ENCODE measurements at regions of chr11 and their contacts with region 1.

Region 1: GRCh38 chr11:101848262-101848661 is 66.5 kb upstream of the CEP126 start:
- DNase-seq: no peak
- H3K4me3 ChIP-seq: no peak overlapping the region
- H3K27ac ChIP-seq: no peak overlapping the region
- H3K27me3 ChIP-seq: no peaks in the 10 kb centered on the region
- CTCF ChIP-seq: peak; percentile 32; the same call in 1 of the 2 replicates

Region 2: DNA sequence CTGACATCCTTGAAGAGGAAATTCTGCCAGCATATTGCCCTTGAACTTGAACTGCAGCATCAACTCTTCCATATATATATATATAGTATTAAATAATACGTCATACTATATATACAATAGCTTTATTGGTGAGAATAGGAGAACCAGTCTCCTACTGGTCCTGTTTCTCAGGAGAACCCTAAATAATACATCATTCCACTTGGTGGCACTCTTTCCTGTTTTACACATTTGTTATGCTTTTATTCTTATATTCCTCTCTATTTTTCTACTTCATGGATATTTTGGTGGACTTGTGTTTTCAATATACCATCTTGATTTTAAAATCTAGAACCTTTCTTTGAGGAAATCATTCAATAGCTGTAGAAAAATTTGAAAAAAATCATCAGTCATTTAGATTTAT is 457.7 kb before region 1 on chr11:
- CTCF ChIA-PET with region 1: interaction called, 30 read pairs
- POLR2A ChIA-PET with region 1: no interaction called
- DNase-seq: no peak
- H3K4me3 ChIP-seq: no peak overlapping the region
- H3K27ac ChIP-seq: no peak overlapping the region
- H3K27me3 ChIP-seq: no peaks in the 10 kb centered on the region
- CTCF ChIP-seq: peak; percentile 47

Region 3: GRCh38 chr11:101428918-101429317 is 419.3 kb before region 1 on chr11:
- CTCF ChIA-PET with region 1: interaction called, 32 read pairs
- POLR2A ChIA-PET with region 1: no interaction called
- DNase-seq: no peak
- H3K4me3 ChIP-seq: no peak overlapping the region
- H3K27ac ChIP-seq: no peak overlapping the region
- H3K27me3 ChIP-seq: no peaks in the 10 kb centered on the region
- CTCF ChIP-seq: peak; percentile 67

Region 4: DNA sequence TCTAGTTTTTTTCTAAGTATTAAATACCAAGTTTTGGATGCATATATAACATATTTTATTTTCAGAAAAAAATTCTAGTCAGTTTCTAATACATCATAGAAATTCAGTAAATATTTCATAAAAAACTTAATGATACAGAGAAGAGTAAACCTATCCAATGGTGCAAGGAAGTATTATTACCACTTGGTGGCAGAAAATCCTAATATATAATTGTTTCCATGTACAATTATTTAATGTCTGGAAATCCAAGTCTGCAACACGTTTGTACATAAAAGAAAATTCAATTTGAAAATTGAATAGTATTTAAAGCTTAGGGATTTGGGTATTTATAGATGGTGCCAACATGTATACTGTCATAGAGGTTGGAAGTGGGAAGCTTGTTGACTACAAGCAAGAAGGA is 391.4 kb before region 1 on chr11:
- CTCF ChIA-PET with region 1: interaction called, 186 read pairs
- POLR2A ChIA-PET with region 1: no interaction called
- DNase-seq: no peak
- H3K4me3 ChIP-seq: no peak overlapping the region
- H3K27ac ChIP-seq: no peak overlapping the region
- H3K27me3 ChIP-seq: no peaks in the 10 kb centered on the region
- CTCF ChIP-seq: peak; percentile 46

Region 5: GRCh38 chr11:101686558-101687242 is 161.6 kb before region 1 on chr11:
- CTCF ChIA-PET with region 1: no interaction called
- POLR2A ChIA-PET with region 1: no interaction called
- DNase-seq: no peak
- H3K4me3 ChIP-seq: no peak overlapping the region
- H3K27ac ChIP-seq: no peak overlapping the region
- H3K27me3 ChIP-seq: no peaks in the 10 kb centered on the region
- CTCF ChIP-seq: no peak

Region 6: GRCh38 chr11:101759771-101760450 is 88.4 kb before region 1 on chr11:
- CTCF ChIA-PET with region 1: interaction called, 24 read pairs
- POLR2A ChIA-PET with region 1: no interaction called
- DNase-seq: no peak
- H3K4me3 ChIP-seq: no peak overlapping the region
- H3K27ac ChIP-seq: no peak overlapping the region
- H3K27me3 ChIP-seq: no peaks in the 10 kb centered on the region
- CTCF ChIP-seq: peak; percentile 46

Measured in AG04450 (cell line).